ENCODE measurements at regions of chr4 and their contacts with region 1.

Region 1: DNA sequence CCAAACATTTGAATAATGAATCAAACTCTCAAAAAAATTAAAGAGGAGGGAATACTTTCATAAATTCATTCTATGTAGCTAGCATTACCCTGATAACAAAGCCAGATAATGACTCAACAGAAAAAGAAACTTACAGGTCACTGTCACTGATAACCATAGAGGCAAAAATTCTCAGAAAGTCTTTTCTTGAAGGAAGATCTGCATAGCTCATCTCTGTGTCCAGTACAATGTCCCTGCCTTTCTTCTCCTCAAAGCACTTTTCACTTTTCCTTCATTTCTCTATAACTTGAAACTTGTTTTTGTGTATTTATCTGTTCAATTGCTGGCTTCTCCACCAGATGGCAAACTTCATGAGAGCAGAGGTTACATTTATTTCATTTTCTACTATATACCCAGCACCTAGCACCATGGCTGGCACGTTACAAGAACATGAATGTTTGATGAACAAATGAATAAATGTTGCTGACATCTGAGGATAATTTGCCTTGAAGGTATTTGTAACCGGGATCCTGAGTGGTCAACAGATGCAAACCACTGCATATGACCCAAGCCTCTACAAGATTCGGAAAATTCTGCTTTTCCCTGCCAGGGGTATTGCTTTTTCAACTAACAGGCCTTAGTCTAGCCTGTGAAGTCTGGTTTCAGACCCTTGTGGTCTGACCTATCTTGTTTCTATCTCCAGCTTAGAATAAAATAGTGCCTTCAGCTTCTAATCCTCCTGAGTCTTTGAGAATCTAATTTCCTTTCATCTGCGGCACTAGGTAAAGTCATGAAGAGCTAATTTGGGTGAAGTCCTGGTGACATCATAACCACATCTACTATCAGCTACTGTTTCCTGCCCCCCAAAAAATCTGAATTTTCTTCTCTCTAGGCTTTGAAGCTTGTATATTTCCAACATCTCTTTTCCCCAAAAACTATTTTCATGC is 52.5 kb upstream of the ANTXR2 start:
- DNase-seq: no peak
- ATAC-seq: peak; percentile 84
- H3K4me3 Mint-ChIP-seq: no peak overlapping the region
- H3K27ac Mint-ChIP-seq: no peak overlapping the region
- H3K4me1 Mint-ChIP-seq: peaks cover 23% of the 10 kb centered on the region
- H3K27me3 Mint-ChIP-seq: no peaks in the 10 kb centered on the region
- CTCF ChIP-seq: no peak

Region 2: DNA sequence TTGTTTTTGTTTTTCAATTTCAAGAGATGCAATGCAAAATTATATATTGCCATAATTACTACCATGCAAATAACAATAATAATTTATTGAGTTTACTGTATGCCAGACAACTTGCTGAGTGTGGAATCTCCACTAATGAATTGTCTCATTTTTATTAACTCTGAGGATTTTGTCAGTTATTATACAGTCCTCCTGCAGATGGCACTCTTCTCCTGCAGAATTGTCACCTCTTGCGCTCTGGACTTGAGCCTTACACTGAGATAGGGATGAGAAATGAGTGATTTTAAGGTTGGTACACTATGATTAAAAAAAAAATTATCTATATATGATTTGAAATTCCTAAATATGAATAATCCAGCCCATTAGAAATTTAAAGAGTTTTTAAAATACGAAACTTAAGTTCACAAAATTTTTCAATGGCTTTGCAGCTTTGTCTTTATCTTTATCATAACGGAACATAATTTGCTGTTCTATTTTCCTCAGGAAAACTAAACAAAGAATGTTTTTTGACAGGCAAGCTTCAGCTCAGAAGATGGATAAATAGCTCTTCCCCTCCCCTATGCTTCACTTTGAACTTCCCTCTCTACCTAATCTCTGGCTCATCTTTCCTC is 1173.5 kb before region 1 on chr4:
- CTCF ChIA-PET with region 1: no interaction called
- POLR2A ChIA-PET with region 1: no interaction called
- intact Hi-C with region 1: loop called (anchors 5 kb)
- DNase-seq: no peak
- ATAC-seq: peak; percentile 68
- H3K4me3 Mint-ChIP-seq: no peak overlapping the region
- H3K27ac Mint-ChIP-seq: no peak overlapping the region
- H3K4me1 Mint-ChIP-seq: no peaks in the 10 kb centered on the region
- H3K27me3 Mint-ChIP-seq: peaks cover 7% of the 10 kb centered on the region
- CTCF ChIP-seq: no peak

Region 3: DNA sequence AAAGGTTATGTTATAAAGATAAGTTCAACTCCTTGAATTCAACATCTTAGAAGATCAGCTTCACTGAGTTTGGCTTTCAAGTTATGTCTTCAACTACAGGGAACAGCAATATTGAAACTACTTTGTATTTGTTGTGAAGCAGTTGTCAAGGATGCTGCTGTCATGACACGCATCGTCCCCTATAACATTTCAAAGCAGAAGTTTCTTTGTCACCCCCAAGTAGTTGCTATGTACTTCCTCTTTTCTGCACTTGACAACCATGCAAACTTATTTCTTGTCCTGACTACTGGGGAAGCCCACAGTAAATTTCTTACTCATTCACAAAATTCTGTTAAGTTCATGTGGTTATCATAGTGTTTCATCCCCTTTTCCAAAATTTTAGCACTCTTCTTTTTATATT is 66.8 kb before region 1 on chr4:
- CTCF ChIA-PET with region 1: interaction called, 3 read pairs
- POLR2A ChIA-PET with region 1: no interaction called
- intact Hi-C with region 1: loop called (anchors 1 kb)
- DNase-seq: no peak
- ATAC-seq: peak; percentile 89
- H3K4me3 Mint-ChIP-seq: peak overlapping the region; percentile 79
- H3K27ac Mint-ChIP-seq: peak overlapping the region; percentile 99
- H3K4me1 Mint-ChIP-seq: peaks cover 30% of the 10 kb centered on the region
- H3K27me3 Mint-ChIP-seq: no peaks in the 10 kb centered on the region
- CTCF ChIP-seq: no peak

Region 4: DNA sequence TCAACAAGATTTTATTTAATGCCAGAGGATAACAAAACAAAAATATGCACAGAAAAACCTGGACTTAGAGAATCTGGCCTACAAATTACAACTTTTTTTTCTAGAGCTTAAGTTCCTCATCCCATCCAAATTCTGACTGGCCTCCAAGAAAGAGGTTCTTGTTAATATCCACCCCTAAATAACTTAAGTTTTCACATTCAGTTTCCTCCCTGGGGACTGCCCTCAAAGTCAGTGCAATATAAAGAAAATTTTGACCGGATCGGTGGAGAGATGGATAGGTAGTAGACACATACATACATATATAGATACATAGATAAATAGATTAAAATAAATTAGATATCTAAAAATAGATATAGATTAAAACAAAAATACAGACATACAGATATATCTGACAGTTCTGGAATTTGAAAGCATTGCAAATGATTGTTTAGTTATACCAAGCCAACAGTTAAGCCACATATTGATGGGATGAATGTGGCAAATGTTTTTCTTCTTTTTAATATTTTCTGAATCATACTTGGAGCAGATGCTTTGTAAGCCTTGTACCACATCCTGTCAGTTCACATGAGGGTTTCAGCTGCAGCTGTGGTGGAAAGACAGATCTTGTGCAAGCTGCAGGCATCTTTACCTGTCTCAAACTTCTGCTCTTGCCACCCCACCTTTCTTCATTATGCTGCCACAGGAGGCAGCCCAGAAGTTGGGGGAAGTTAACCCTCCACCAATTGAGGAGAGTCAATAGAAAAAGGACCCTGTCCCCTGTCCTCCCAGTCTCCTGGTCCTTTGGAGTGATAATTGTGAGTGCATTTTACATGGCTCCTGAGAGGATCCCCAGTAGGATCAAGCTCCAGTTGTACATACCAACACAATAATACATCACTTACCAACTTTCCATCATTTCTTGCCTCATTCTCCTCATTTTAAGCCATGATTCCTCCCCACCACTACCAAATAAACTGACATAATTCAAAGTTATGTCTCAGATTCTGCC is 13.3 kb after region 1 on chr4:
- CTCF ChIA-PET with region 1: interaction called, 20 read pairs
- POLR2A ChIA-PET with region 1: no interaction called
- intact Hi-C with region 1: no loop called
- DNase-seq: no peak
- ATAC-seq: peak; percentile 72
- H3K4me3 Mint-ChIP-seq: peak overlapping the region; percentile 21
- H3K27ac Mint-ChIP-seq: peak overlapping the region; percentile 46
- H3K4me1 Mint-ChIP-seq: peaks cover 33% of the 10 kb centered on the region
- H3K27me3 Mint-ChIP-seq: no peaks in the 10 kb centered on the region
- CTCF ChIP-seq: no peak

Region 5: GRCh38 chr4:80178964-80179363 is 53.4 kb after region 1 on chr4:
- CTCF ChIA-PET with region 1: interaction called, 100 read pairs
- POLR2A ChIA-PET with region 1: interaction called, 33 read pairs
- intact Hi-C with region 1: loop called (anchors 1 kb)
- DNase-seq: no peak
- ATAC-seq: no peak
- H3K4me3 Mint-ChIP-seq: no peak overlapping the region
- H3K27ac Mint-ChIP-seq: no peak overlapping the region
- H3K4me1 Mint-ChIP-seq: peaks cover 62% of the 10 kb centered on the region
- H3K27me3 Mint-ChIP-seq: no peaks in the 10 kb centered on the region
- CTCF ChIP-seq: no peak

Region 6: GRCh38 chr4:80215449-80216052 is 90.0 kb after region 1 on chr4:
- CTCF ChIA-PET with region 1: interaction called, 21 read pairs
- POLR2A ChIA-PET with region 1: no interaction called
- intact Hi-C with region 1: loop called (anchors 1 kb)
- DNase-seq: no peak
- ATAC-seq: no peak
- H3K4me3 Mint-ChIP-seq: no peak overlapping the region
- H3K27ac Mint-ChIP-seq: no peak overlapping the region
- H3K4me1 Mint-ChIP-seq: peaks cover 2% of the 10 kb centered on the region
- H3K27me3 Mint-ChIP-seq: peaks cover 28% of the 10 kb centered on the region
- CTCF ChIP-seq: peak; percentile 86

Measured in activated B cell treated with CpG ODN at 0.5 μM for 24 hours (primary cell).